ENCODE measurements at regions of chr4 and their contacts with region 1.

Region 1: GRCh38 chr4:163554870-163555465 is 60.5 kb downstream of the TMA16 start:
- DNase-seq: peak in 1 of 4 experiments; percentile 19
- ATAC-seq: peak; percentile 50; the same call in 1 of the 3 replicates
- H3K4me3 ChIP-seq: no peak overlapping the region
- H3K27ac ChIP-seq: no peak overlapping the region
- H3K4me1 ChIP-seq: no peaks in the 10 kb centered on the region
- H3K27me3 ChIP-seq: no peaks in the 10 kb centered on the region
- CTCF ChIP-seq: peak; percentile 38 to 70 (median 38); a peak in 4 of 6 replicates
- EP300 ChIP-seq: no peak
- POLR2A ChIP-seq: no peak
- RAD21 ChIP-seq: peak; percentile 49 to 59

Region 2: GRCh38 chr4:163335384-163335783 is 219.6 kb before region 1 on chr4:
- CTCF ChIA-PET with region 1: no interaction called
- POLR2A ChIA-PET with region 1: no interaction called
- in situ Hi-C with region 1: no loop called
- intact Hi-C with region 1: no loop called
- DNase-seq: no peak
- ATAC-seq: no peak
- H3K4me3 ChIP-seq: no peak overlapping the region
- H3K27ac ChIP-seq: no peak overlapping the region
- H3K4me1 ChIP-seq: peaks cover 0 to 8% of the 10 kb centered on the region in 2 experiments; a peak in 4 of 5 replicates
- H3K27me3 ChIP-seq: peaks cover 0 to 15% of the 10 kb centered on the region in 2 experiments; a peak in 1 of 5 replicates
- CTCF ChIP-seq: no peak
- EP300 ChIP-seq: no peak
- POLR2A ChIP-seq: no peak
- RAD21 ChIP-seq: no peak

Region 3: DNA sequence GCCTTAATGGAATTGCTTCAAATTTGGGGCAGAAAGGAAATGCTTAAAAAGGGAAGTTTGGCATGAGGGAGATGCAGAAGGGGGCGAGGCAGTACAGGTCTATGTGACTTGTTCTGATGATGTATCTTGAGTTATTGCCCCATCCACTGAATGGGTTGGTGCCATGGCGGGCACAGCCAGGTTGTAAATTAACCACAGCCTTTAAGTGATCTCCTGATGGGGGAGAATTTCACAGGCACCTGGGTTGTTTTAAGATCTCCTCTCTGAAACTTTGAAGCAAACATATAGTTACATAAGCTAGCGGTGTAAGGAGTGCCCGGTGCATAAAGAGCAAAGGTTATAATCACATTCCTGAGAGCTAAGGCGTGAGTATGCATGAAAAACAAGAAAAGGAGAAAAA is 174.3 kb before region 1 on chr4:
- CTCF ChIA-PET with region 1: no interaction called
- POLR2A ChIA-PET with region 1: no interaction called
- in situ Hi-C with region 1: no loop called
- intact Hi-C with region 1: no loop called
- DNase-seq: no peak
- ATAC-seq: no peak
- H3K4me3 ChIP-seq: no peak overlapping the region
- H3K27ac ChIP-seq: no peak overlapping the region
- H3K4me1 ChIP-seq: no peaks in the 10 kb centered on the region
- H3K27me3 ChIP-seq: no peaks in the 10 kb centered on the region
- CTCF ChIP-seq: no peak
- EP300 ChIP-seq: no peak
- POLR2A ChIP-seq: no peak
- RAD21 ChIP-seq: no peak

Region 4: GRCh38 chr4:163681208-163681821 is 126.3 kb after region 1 on chr4:
- CTCF ChIA-PET with region 1: no interaction called
- POLR2A ChIA-PET with region 1: no interaction called
- in situ Hi-C with region 1: no loop called
- intact Hi-C with region 1: loop called (anchors 1 kb)
- DNase-seq: peak; percentile 26 to 46 (median 40)
- ATAC-seq: peak; percentile 78
- H3K4me3 ChIP-seq: no peak overlapping the region
- H3K27ac ChIP-seq: no peak overlapping the region
- H3K4me1 ChIP-seq: no peaks in the 10 kb centered on the region
- H3K27me3 ChIP-seq: no peaks in the 10 kb centered on the region
- CTCF ChIP-seq: peak in 2 of 3 experiments; percentile 35 to 41; a peak in 3 of 6 replicates
- EP300 ChIP-seq: no peak
- POLR2A ChIP-seq: no peak
- RAD21 ChIP-seq: peak in 1 of 2 experiments; percentile 58; a peak in 3 of 4 replicates

Region 5: GRCh38 chr4:164023214-164023613 is 468.2 kb after region 1 on chr4:
- CTCF ChIA-PET with region 1: no interaction called
- POLR2A ChIA-PET with region 1: no interaction called
- in situ Hi-C with region 1: no loop called
- intact Hi-C with region 1: loop called (anchors 10 kb)
- DNase-seq: no peak
- ATAC-seq: no peak
- H3K4me3 ChIP-seq: no peak overlapping the region
- H3K27ac ChIP-seq: no peak overlapping the region
- H3K4me1 ChIP-seq: no peaks in the 10 kb centered on the region
- H3K27me3 ChIP-seq: no peaks in the 10 kb centered on the region
- CTCF ChIP-seq: no peak
- EP300 ChIP-seq: no peak
- POLR2A ChIP-seq: no peak
- RAD21 ChIP-seq: no peak

Region 6: GRCh38 chr4:164731827-164732474 is 1177.0 kb after region 1 on chr4:
- CTCF ChIA-PET with region 1: no interaction called
- POLR2A ChIA-PET with region 1: no interaction called
- in situ Hi-C with region 1: loop called (anchors 25 kb)
- intact Hi-C with region 1: loop called (anchors 2 kb)
- DNase-seq: peak; percentile 57 to 67 (median 64)
- ATAC-seq: peak; percentile 79
- H3K4me3 ChIP-seq: no peak overlapping the region
- H3K27ac ChIP-seq: no peak overlapping the region
- H3K4me1 ChIP-seq: no peaks in the 10 kb centered on the region
- H3K27me3 ChIP-seq: no peaks in the 10 kb centered on the region
- CTCF ChIP-seq: peak; percentile 70 to 82 (median 77)
- EP300 ChIP-seq: no peak
- POLR2A ChIP-seq: no peak
- RAD21 ChIP-seq: peak; percentile 73 to 81

Region 7: GRCh38 chr4:164748375-164748774 is 1193.4 kb after region 1 on chr4:
- CTCF ChIA-PET with region 1: interaction called, 4 read pairs
- POLR2A ChIA-PET with region 1: no interaction called
- in situ Hi-C with region 1: loop called (anchors 25 kb)
- intact Hi-C with region 1: loop called (anchors 5 kb)
- DNase-seq: peak in 3 of 4 experiments; percentile 10 to 24 (median 16)
- ATAC-seq: no peak
- H3K4me3 ChIP-seq: no peak overlapping the region
- H3K27ac ChIP-seq: no peak overlapping the region
- H3K4me1 ChIP-seq: no peaks in the 10 kb centered on the region; a peak in 1 of 5 replicates
- H3K27me3 ChIP-seq: no peaks in the 10 kb centered on the region
- CTCF ChIP-seq: peak in 1 of 3 experiments; percentile 53; a peak in 2 of 6 replicates
- EP300 ChIP-seq: no peak
- POLR2A ChIP-seq: no peak
- RAD21 ChIP-seq: peak; percentile 29 to 52

Region 8: GRCh38 chr4:164997324-164997723 is 1442.4 kb after region 1 on chr4:
- CTCF ChIA-PET with region 1: no interaction called
- POLR2A ChIA-PET with region 1: no interaction called
- in situ Hi-C with region 1: no loop called
- intact Hi-C with region 1: loop called (anchors 5 kb)
- DNase-seq: peak in 2 of 4 experiments; percentile 14 to 53
- ATAC-seq: peak; percentile 57
- H3K4me3 ChIP-seq: no peak overlapping the region
- H3K27ac ChIP-seq: no peak overlapping the region
- H3K4me1 ChIP-seq: no peaks in the 10 kb centered on the region
- H3K27me3 ChIP-seq: peaks cover 4 to 11% of the 10 kb centered on the region in 2 experiments; a peak in 3 of 5 replicates
- CTCF ChIP-seq: peak; percentile 41 to 60 (median 49); a peak in 4 of 6 replicates
- EP300 ChIP-seq: no peak
- POLR2A ChIP-seq: no peak
- RAD21 ChIP-seq: peak; percentile 30 to 54; a peak in 3 of 4 replicates

Measured in K562 (cell line).